SK-N-SH (cell line): ENCODE measurements at regions of chr2 and their contacts with region 1.

Region 1: GRCh38 chr2:21194858-21195271 is 71.1 kb downstream of the TDRD15 start:
- DNase-seq: peak; percentile 42
- H3K4me3 ChIP-seq: no peak overlapping the region
- H3K27ac ChIP-seq: peak overlapping the region in 1 of 2 experiments; percentile 93; a peak in 2 of 4 replicates
- H3K4me1 ChIP-seq: peaks cover 0 to 47% of the 10 kb centered on the region in 2 experiments; a peak in 2 of 4 replicates
- H3K27me3 ChIP-seq: no peaks in the 10 kb centered on the region
- CTCF ChIP-seq: no peak
- EP300 ChIP-seq: peak in 1 of 2 experiments; percentile 92; a peak in 2 of 4 replicates
- RAD21 ChIP-seq: peak; percentile 25; the same call in 1 of the 2 replicates

Region 2: GRCh38 chr2:21175895-21176646 is 18.8 kb before region 1 on chr2:
- CTCF ChIA-PET with region 1: interaction called, 11 read pairs
- POLR2A ChIA-PET with region 1: no interaction called
- DNase-seq: peak; percentile 40
- H3K4me3 ChIP-seq: no peak overlapping the region; a peak in 1 of 4 replicates
- H3K27ac ChIP-seq: peak overlapping the region in 1 of 2 experiments; percentile 13; a peak in 2 of 4 replicates
- H3K4me1 ChIP-seq: peaks cover 0 to 2% of the 10 kb centered on the region in 2 experiments; a peak in 2 of 4 replicates
- H3K27me3 ChIP-seq: no peaks in the 10 kb centered on the region
- CTCF ChIP-seq: peak; percentile 40
- EP300 ChIP-seq: no peak
- RAD21 ChIP-seq: peak; percentile 85

Region 3: GRCh38 chr2:21658907-21659477 is 464.1 kb after region 1 on chr2:
- CTCF ChIA-PET with region 1: no interaction called
- POLR2A ChIA-PET with region 1: no interaction called
- DNase-seq: no peak
- H3K4me3 ChIP-seq: no peak overlapping the region
- H3K27ac ChIP-seq: no peak overlapping the region
- H3K4me1 ChIP-seq: peaks cover 0 to 3% of the 10 kb centered on the region in 2 experiments; a peak in 2 of 4 replicates
- H3K27me3 ChIP-seq: no peaks in the 10 kb centered on the region
- CTCF ChIP-seq: no peak
- EP300 ChIP-seq: no peak
- RAD21 ChIP-seq: no peak